ENCODE measurements at regions of chr5 and their contacts with region 1.

Region 1: GRCh38 chr5:59799668-59800346 is 93.7 kb downstream of the PDE4D start:
- DNase-seq: no peak
- H3K4me3 ChIP-seq: peak overlapping the region; percentile 28
- H3K27ac ChIP-seq: peak overlapping the region; percentile 30
- H3K4me1 ChIP-seq: peaks cover 16% of the 10 kb centered on the region
- H3K27me3 ChIP-seq: peaks cover 12% of the 10 kb centered on the region
- CTCF ChIP-seq: peak; percentile 87

Region 2: GRCh38 chr5:59317023-59317773 is 482.6 kb before region 1 on chr5:
- intact Hi-C with region 1: no loop called
- DNase-seq: no peak
- H3K4me3 ChIP-seq: peak overlapping the region; percentile 11
- H3K27ac ChIP-seq: peak overlapping the region; percentile 79
- H3K4me1 ChIP-seq: peaks cover 83% of the 10 kb centered on the region
- H3K27me3 ChIP-seq: no peaks in the 10 kb centered on the region
- CTCF ChIP-seq: no peak

Region 3: GRCh38 chr5:59390074-59390659 is 409.6 kb before region 1 on chr5:
- intact Hi-C with region 1: loop called (anchors 2 kb)
- DNase-seq: no peak
- H3K4me3 ChIP-seq: no peak overlapping the region
- H3K27ac ChIP-seq: no peak overlapping the region
- H3K4me1 ChIP-seq: no peaks in the 10 kb centered on the region
- H3K27me3 ChIP-seq: no peaks in the 10 kb centered on the region
- CTCF ChIP-seq: peak; percentile 80

Measured in left ventricle myocardium inferior (tissue), 1 donor.